HepG2 (cell line): ENCODE measurements at regions of chr4 and their contacts with region 1.

Region 1: DNA sequence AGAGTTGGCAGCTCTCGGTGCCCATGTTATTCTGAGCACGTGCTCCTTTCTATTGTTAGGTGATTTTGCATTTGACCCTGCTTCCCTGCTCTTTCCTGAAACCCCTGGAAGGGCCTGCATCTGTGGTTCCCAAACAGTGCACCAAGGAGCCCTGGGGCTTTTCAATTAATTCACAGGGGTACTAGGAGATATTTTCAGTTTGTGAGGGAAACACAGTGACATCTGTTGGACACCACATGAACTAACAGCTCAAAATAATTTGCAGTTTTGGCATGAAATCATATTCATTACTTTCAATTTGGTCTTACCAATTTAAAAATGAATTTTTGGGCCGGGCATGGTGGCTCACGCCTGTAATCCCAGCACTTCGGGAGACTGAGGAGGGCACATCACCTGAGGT is 156.6 kb downstream of the GATB start:
- DNase-seq: no peak
- ATAC-seq: peak; percentile 49; the same call in 2 of the 3 replicates
- H3K4me3 ChIP-seq: no peak overlapping the region
- H3K27ac ChIP-seq: no peak overlapping the region
- H3K4me1 ChIP-seq: no peaks in the 10 kb centered on the region
- H3K27me3 ChIP-seq: no peaks in the 10 kb centered on the region
- CTCF ChIP-seq: peak; percentile 35; the same call in 1 of the 2 replicates
- EP300 ChIP-seq: no peak
- POLR2A ChIP-seq: no peak
- RAD21 ChIP-seq: no peak

Region 2: GRCh38 chr4:151117371-151117962 is 486.8 kb before region 1 on chr4:
- CTCF ChIA-PET with region 1: no interaction called
- POLR2A ChIA-PET with region 1: no interaction called
- in situ Hi-C with region 1: loop called (anchors 10 kb)
- intact Hi-C with region 1: loop called (anchors 2 kb)
- DNase-seq: peak; percentile 78
- ATAC-seq: peak; percentile 85
- H3K4me3 ChIP-seq: no peak overlapping the region
- H3K27ac ChIP-seq: peak overlapping the region; percentile 21
- H3K4me1 ChIP-seq: peaks cover 11% of the 10 kb centered on the region
- H3K27me3 ChIP-seq: no peaks in the 10 kb centered on the region
- CTCF ChIP-seq: peak; percentile 79
- EP300 ChIP-seq: no peak
- POLR2A ChIP-seq: no peak
- RAD21 ChIP-seq: peak; percentile 64

Region 3: DNA sequence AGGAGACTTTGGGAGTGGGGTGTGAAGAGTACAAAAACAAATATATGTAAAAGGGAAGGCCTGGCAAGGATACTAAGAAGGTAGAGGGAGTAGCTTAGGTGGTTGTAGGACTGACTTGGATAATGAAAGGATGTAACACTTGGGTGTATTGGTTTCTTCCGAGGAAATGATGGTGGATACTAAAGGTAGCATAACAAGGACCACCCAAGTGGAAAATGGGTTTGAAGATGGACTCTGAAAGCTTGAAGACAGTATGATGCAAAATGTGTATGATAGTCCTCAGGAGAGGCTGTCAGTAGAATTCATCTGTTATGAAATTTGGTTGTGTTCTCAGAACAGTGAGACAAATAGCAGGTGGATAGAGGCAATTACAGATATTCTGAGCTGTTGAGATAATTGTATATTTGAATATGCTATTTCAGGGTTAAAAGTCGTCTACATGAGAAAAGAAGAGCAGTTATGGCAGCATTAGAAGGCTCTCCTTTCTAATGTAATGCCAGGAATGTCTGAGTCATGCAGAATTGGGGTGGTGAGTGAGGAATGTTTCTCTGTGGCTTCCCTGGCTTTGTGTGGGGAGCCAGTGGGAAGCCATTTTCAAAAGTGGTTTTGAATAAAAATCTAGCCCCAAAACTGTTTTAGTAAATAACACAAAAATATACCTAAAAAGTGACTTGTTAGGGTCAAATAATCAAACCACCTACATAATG is 119.7 kb before region 1 on chr4:
- CTCF ChIA-PET with region 1: no interaction called
- POLR2A ChIA-PET with region 1: no interaction called
- in situ Hi-C with region 1: loop called (anchors 10 kb)
- intact Hi-C with region 1: loop called (anchors 1 kb)
- DNase-seq: peak; percentile 38
- ATAC-seq: no peak
- H3K4me3 ChIP-seq: no peak overlapping the region
- H3K27ac ChIP-seq: no peak overlapping the region
- H3K4me1 ChIP-seq: peaks cover 16% of the 10 kb centered on the region
- H3K27me3 ChIP-seq: no peaks in the 10 kb centered on the region
- CTCF ChIP-seq: no peak
- EP300 ChIP-seq: no peak
- POLR2A ChIP-seq: no peak
- RAD21 ChIP-seq: no peak

Region 4: GRCh38 chr4:151489462-151490203 is 114.6 kb before region 1 on chr4:
- CTCF ChIA-PET with region 1: no interaction called
- POLR2A ChIA-PET with region 1: no interaction called
- in situ Hi-C with region 1: loop called (anchors 10 kb)
- intact Hi-C with region 1: loop called (anchors 1 kb)
- DNase-seq: peak; percentile 12
- ATAC-seq: peak; percentile 92
- H3K4me3 ChIP-seq: no peak overlapping the region
- H3K27ac ChIP-seq: no peak overlapping the region
- H3K4me1 ChIP-seq: peaks cover 8% of the 10 kb centered on the region
- H3K27me3 ChIP-seq: no peaks in the 10 kb centered on the region
- CTCF ChIP-seq: peak; percentile 58
- EP300 ChIP-seq: no peak
- POLR2A ChIP-seq: no peak
- RAD21 ChIP-seq: no peak

Region 5: DNA sequence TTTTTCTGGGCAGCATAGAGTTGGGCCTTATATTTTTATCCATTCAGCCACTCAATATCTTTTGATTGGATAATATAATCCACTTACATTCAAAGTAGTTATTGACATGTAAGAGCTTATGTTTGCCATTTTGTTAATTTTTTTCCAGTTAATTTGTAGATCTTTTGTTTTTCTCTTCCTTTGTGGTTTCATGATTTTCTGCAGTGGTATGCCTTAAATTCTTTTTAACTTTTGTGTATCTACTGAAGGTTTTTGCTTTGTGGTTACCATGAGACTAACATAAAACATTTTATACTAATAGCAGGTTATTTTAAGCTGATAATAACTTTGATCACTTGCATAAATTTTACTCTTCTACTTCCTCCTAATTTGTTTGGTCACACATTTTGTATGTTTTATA is 297.4 kb after region 1 on chr4:
- CTCF ChIA-PET with region 1: no interaction called
- POLR2A ChIA-PET with region 1: no interaction called
- in situ Hi-C with region 1: no loop called
- intact Hi-C with region 1: no loop called
- DNase-seq: no peak
- ATAC-seq: no peak
- H3K4me3 ChIP-seq: no peak overlapping the region
- H3K27ac ChIP-seq: no peak overlapping the region
- H3K4me1 ChIP-seq: no peaks in the 10 kb centered on the region
- H3K27me3 ChIP-seq: no peaks in the 10 kb centered on the region
- CTCF ChIP-seq: no peak
- EP300 ChIP-seq: no peak
- POLR2A ChIP-seq: no peak
- RAD21 ChIP-seq: no peak